ENCODE measurements at regions of chr2 and their contacts with region 1.

Region 1: DNA sequence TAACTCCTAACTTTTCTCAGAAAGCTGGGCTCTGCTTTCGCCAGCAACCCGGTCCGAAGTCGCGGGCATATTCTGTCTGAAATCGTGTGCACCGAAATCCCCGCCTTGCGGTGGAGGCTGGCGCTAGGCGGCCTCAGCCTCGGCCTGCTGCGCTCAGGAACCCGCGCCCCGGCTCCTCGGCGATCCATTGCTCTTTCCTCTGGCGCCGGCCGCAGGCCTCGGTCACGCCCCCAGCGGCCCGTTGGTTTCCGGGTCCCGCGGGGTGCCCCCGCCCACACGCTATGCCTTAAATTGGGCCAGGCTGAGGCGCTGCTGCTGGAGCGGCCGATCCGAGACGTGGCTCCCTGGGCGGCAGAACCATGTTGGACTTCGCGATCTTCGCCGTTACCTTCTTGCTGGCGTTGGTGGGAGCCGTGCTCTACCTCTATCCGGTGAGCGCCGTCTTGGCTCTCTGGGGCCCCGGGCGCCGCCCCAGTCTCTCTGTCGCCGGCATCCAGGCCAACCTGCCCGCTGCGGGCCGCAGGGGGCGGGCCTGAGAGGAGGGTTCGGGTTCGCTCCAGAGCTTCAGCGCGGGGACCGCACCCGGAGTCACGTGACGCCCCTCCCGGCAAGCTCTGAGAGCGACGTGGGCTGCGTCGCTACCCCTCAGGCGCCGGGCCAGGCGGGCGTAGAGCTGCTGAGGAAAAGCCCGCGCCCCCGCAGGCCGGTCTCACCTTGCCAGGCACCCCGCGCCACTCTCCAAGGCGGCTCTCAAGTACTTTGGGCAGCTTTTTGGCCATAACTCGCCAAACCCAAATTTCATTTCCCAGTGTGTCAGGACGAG is at the start of gene CYP20A1:
- DNase-seq: peak; percentile 95 to 99 (median 98)
- H3K4me3 ChIP-seq: peak within 1 kb of the TSS; percentile 91 to 100
- H3K4me3 Mint-ChIP-seq: peak within 1 kb of the TSS; percentile 94 to 100 (median 98)
- H3K27ac ChIP-seq: peak within 1 kb of the TSS; percentile 90
- H3K27ac Mint-ChIP-seq: peak within 1 kb of the TSS; percentile 98 to 100 (median 100)
- H3K4me1 ChIP-seq: peaks cover 19% of the 10 kb centered on the region
- H3K4me1 Mint-ChIP-seq: peaks cover 23 to 52% (median 28%) of the 10 kb centered on the region in 4 donors
- H3K27me3 ChIP-seq: no peaks in the 10 kb centered on the region
- H3K27me3 Mint-ChIP-seq: no peaks in the 10 kb centered on the region
- total RNA-seq, gene CYP20A1: 47.1 to 50.8 TPM

Region 2: DNA sequence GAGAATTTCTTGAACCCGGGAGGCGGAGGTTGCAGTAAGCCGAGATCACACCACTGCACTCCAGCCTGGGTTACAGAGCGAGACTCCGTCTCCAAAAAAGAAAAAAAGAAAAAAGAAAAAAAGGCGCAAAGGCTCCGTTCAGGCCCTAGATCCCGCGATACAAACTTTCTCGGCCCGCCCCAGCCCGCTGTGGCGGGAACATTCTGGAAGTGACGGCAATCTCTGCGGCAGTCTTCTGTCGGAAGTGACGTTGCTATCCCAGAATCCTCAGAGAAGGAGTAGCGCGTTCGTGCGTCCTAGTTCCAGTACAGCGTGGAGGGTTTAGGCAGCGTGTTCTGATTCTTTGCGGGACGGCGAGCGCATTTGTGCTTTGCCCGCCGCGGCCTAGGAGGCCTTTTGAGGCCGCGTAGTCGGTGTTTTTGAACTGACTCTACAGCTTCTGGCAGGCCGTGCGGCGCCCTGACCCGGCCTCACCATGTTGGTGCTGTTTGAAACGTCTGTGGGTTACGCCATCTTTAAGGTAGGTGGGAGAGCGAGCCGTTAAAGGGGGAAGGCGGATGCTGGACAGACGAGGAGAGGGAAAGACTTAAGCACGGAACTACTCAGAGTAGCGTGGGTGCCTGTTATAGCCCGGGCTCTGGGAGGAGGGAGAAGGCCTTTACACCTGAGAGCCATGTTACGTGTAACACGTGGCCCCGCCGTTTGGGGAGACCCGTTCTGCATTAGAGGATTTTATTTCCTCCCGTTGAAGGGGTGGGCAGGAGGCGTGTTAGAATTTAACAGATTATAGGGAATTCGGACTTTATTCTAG is 973.2 kb before region 1 on chr2 and contains the start of gene NOP58:
- CTCF ChIA-PET with region 1: no interaction called
- POLR2A ChIA-PET with region 1: no interaction called
- intact Hi-C with region 1: loop called (anchors 5 kb)
- DNase-seq: peak; percentile 91 to 96 (median 94)
- H3K4me3 ChIP-seq: peak within 1 kb of the TSS; percentile 92 to 97
- H3K4me3 Mint-ChIP-seq: peak within 1 kb of the TSS in 6 of 8 donors; percentile 55 to 79 (median 67)
- H3K27ac ChIP-seq: peak within 1 kb of the TSS; percentile 99
- H3K27ac Mint-ChIP-seq: peak within 1 kb of the TSS in 5 of 7 donors; percentile 48 to 91 (median 72)
- H3K4me1 ChIP-seq: peaks cover 39% of the 10 kb centered on the region
- H3K4me1 Mint-ChIP-seq: peaks cover 9 to 35% (median 16%) of the 10 kb centered on the region in 4 donors
- H3K27me3 ChIP-seq: no peaks in the 10 kb centered on the region
- H3K27me3 Mint-ChIP-seq: no peaks in the 10 kb centered on the region
- total RNA-seq, gene NOP58: 114 to 123 TPM

Region 3: GRCh38 chr2:202588647-202589581 is 650.0 kb before region 1 on chr2:
- CTCF ChIA-PET with region 1: no interaction called
- POLR2A ChIA-PET with region 1: no interaction called
- intact Hi-C with region 1: loop called (anchors 5 kb)
- DNase-seq: peak; percentile 71 to 77 (median 72)
- H3K4me3 ChIP-seq: no peak overlapping the region
- H3K4me3 Mint-ChIP-seq: peak overlapping the region in 2 of 8 donors; percentile 43 to 50
- H3K27ac ChIP-seq: no peak overlapping the region
- H3K27ac Mint-ChIP-seq: peak overlapping the region in 1 of 7 donors; percentile 4
- H3K4me1 ChIP-seq: peaks cover 5% of the 10 kb centered on the region
- H3K4me1 Mint-ChIP-seq: peaks cover 4 to 8% (median 7%) of the 10 kb centered on the region in 4 donors
- H3K27me3 ChIP-seq: no peaks in the 10 kb centered on the region
- H3K27me3 Mint-ChIP-seq: peaks cover 0 to 2% of the 10 kb centered on the region in 2 donors

Region 4: GRCh38 chr2:202671317-202672035 is 567.4 kb before region 1 on chr2:
- CTCF ChIA-PET with region 1: no interaction called
- POLR2A ChIA-PET with region 1: no interaction called
- intact Hi-C with region 1: no loop called
- DNase-seq: no peak
- H3K4me3 ChIP-seq: no peak overlapping the region
- H3K4me3 Mint-ChIP-seq: no peak overlapping the region
- H3K27ac ChIP-seq: no peak overlapping the region
- H3K27ac Mint-ChIP-seq: peak overlapping the region in 1 of 7 donors; percentile 14
- H3K4me1 ChIP-seq: peaks cover 40% of the 10 kb centered on the region
- H3K4me1 Mint-ChIP-seq: peaks cover 35 to 64% (median 46%) of the 10 kb centered on the region in 4 donors
- H3K27me3 ChIP-seq: no peaks in the 10 kb centered on the region
- H3K27me3 Mint-ChIP-seq: no peaks in the 10 kb centered on the region

Region 5: DNA sequence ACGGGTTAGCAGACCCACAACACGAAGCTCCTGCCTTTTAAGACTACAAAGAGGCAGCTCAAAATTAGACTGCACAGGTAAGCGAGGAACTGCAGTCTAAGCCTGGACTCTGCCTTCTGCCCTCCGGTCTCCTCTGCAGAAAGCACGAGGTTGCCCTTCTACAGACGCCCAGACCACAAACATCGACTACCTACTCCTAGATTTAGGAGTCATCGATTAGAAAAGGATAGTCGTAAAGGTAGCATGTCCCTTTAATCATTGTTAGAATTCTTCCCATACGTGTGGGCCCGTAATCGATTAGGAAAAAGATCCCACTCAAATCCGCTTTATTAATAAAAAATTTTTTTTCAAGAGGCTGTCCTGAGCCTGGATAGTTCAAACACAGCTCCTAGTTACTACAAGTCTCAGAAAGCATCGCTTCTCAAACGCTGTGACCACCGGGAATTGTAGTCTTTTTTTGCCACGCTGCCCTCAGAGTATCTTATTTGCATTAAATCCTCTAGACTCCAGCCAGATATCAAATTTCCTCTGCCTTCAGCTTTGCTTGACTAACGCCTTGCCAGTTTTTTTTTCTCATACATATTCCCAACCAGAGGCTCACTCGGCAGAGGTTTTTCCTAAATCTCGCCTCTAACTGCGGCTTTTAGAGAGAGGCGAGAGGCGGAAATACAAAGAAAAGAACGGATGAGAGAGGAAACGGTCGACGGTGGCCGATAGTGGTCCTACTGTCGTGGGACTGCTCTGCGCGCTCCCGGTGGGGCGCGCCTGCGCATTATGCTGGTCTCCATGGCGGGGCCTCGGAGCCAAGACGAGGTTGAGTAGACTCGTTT is 327.2 kb before region 1 on chr2 and contains the starts of genes CARF and WDR12:
- CTCF ChIA-PET with region 1: interaction called, 7 read pairs
- POLR2A ChIA-PET with region 1: interaction called, 28 read pairs
- intact Hi-C with region 1: loop called (anchors 1 kb)
- DNase-seq: peak; percentile 92
- H3K4me3 ChIP-seq: peak within 1 kb of the TSS; percentile 94 to 96
- H3K4me3 Mint-ChIP-seq: peak within 1 kb of the TSS; percentile 92 to 99 (median 98)
- H3K27ac ChIP-seq: peak within 1 kb of the TSS; percentile 74
- H3K27ac Mint-ChIP-seq: peak within 1 kb of the TSS; percentile 93 to 99 (median 98)
- H3K4me1 ChIP-seq: peaks cover 15% of the 10 kb centered on the region
- H3K4me1 Mint-ChIP-seq: peaks cover 16 to 48% (median 32%) of the 10 kb centered on the region in 4 donors
- H3K27me3 ChIP-seq: no peaks in the 10 kb centered on the region
- H3K27me3 Mint-ChIP-seq: no peaks in the 10 kb centered on the region
- total RNA-seq, gene CARF: 24.4 to 27.6 TPM
- total RNA-seq, gene WDR12: 21.3 to 25.0 TPM

Region 6: DNA sequence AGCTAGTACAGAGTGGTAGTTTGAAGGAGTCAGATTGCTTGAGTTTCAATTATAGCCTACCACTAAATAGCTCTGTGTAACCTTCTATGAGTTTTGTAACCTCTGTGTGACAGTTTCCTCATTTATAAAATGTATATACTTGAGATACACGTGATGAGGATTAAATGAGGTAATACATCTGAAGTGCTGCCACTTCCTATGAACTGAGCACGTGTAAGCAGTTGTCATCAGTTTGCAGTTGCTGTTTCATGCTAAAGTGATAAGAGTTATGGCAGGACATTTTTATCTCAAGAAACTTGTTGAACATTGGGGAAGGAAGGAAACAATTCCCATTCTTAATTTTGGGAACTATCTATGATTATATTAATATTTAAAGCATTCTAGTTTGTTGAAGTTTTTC is 288.3 kb before region 1 on chr2:
- CTCF ChIA-PET with region 1: no interaction called
- POLR2A ChIA-PET with region 1: no interaction called
- intact Hi-C with region 1: no loop called
- DNase-seq: no peak
- H3K4me3 ChIP-seq: no peak overlapping the region
- H3K4me3 Mint-ChIP-seq: no peak overlapping the region
- H3K27ac ChIP-seq: no peak overlapping the region
- H3K27ac Mint-ChIP-seq: no peak overlapping the region
- H3K4me1 ChIP-seq: no peaks in the 10 kb centered on the region
- H3K4me1 Mint-ChIP-seq: peaks cover 0 to 2% (median 0%) of the 10 kb centered on the region in 4 donors
- H3K27me3 ChIP-seq: no peaks in the 10 kb centered on the region
- H3K27me3 Mint-ChIP-seq: no peaks in the 10 kb centered on the region

Region 7: DNA sequence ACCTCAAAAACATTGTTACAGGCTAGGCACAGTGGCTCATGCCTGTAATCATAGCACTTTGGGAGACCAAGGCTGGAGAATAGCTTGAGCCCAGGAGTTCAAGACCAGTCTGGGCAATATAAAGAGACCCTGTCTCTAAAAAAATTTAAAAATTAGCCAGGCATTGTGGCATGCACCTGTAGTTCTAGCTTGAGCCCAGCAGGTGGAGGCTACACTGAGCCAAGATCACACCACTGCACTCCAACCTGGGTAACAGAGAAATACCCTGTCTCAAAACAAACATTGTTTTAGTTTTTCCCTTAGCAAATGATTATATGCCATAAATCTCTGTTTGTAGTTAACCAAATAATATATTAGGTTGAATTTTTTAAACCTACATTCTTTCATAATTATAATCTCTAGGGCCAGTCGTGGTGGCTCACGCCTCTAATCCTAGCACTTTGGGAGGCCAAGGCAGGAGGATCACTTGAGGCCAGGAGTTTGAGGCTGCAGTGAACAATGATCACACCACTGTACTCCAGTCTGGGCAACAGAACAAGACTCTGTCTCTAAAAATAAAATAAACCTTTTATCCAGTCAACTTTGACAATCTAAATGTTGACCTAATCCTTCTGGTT is 13.4 kb before region 1 on chr2:
- CTCF ChIA-PET with region 1: interaction called, 24 read pairs
- POLR2A ChIA-PET with region 1: interaction called, 4 read pairs
- intact Hi-C with region 1: loop called (anchors 1 kb)
- DNase-seq: peak in 4 of 5 donors; percentile 20 to 37 (median 28)
- H3K4me3 ChIP-seq: no peak overlapping the region
- H3K4me3 Mint-ChIP-seq: no peak overlapping the region
- H3K27ac ChIP-seq: no peak overlapping the region
- H3K27ac Mint-ChIP-seq: no peak overlapping the region
- H3K4me1 ChIP-seq: no peaks in the 10 kb centered on the region
- H3K4me1 Mint-ChIP-seq: no peaks in the 10 kb centered on the region
- H3K27me3 ChIP-seq: no peaks in the 10 kb centered on the region
- H3K27me3 Mint-ChIP-seq: no peaks in the 10 kb centered on the region

Region 8: GRCh38 chr2:203280428-203281064 is 41.6 kb after region 1 on chr2:
- CTCF ChIA-PET with region 1: no interaction called
- POLR2A ChIA-PET with region 1: no interaction called
- intact Hi-C with region 1: no loop called
- DNase-seq: no peak
- H3K4me3 ChIP-seq: no peak overlapping the region
- H3K4me3 Mint-ChIP-seq: no peak overlapping the region
- H3K27ac ChIP-seq: no peak overlapping the region
- H3K27ac Mint-ChIP-seq: no peak overlapping the region
- H3K4me1 ChIP-seq: no peaks in the 10 kb centered on the region
- H3K4me1 Mint-ChIP-seq: peaks cover 0 to 4% (median 1%) of the 10 kb centered on the region in 4 donors
- H3K27me3 ChIP-seq: no peaks in the 10 kb centered on the region
- H3K27me3 Mint-ChIP-seq: no peaks in the 10 kb centered on the region

Region 9: DNA sequence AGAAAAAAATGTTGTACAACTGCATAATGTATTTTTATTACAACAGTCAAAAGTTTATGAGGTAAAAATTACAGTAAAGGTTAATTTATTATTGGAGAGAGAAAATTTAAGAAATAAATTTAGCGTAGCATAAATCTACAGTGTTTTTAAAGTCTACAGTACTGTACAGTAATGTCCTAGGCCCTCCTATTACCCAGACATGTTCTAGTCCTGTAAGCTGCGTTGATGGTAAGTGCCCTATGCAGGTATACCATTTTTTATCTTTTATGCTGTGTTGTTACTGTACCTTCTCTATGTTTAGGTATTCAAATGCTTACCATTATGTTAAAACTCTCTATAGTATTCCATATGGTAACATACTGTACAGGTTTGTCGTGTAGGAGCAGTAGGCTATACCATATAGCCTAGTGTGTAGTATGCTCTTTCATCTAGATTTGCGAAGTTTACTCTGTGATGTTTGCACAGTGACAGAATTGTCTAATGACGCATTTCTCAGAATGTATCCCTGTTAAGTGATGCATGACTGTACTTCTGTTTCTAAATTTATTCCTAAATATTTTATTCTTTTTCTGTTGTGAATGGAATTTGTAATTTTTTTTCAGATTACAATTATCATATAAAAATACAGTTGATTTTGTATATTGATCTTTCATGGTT is 113.8 kb after region 1 on chr2:
- CTCF ChIA-PET with region 1: no interaction called
- POLR2A ChIA-PET with region 1: no interaction called
- intact Hi-C with region 1: no loop called
- DNase-seq: no peak
- H3K4me3 ChIP-seq: no peak overlapping the region
- H3K4me3 Mint-ChIP-seq: no peak overlapping the region
- H3K27ac ChIP-seq: no peak overlapping the region
- H3K27ac Mint-ChIP-seq: no peak overlapping the region
- H3K4me1 ChIP-seq: no peaks in the 10 kb centered on the region
- H3K4me1 Mint-ChIP-seq: peaks cover 0 to 3% (median 2%) of the 10 kb centered on the region in 4 donors
- H3K27me3 ChIP-seq: no peaks in the 10 kb centered on the region
- H3K27me3 Mint-ChIP-seq: no peaks in the 10 kb centered on the region

Region 10: GRCh38 chr2:203706403-203706802 is 467.5 kb after region 1 on chr2 and contains the start of gene CD28:
- CTCF ChIA-PET with region 1: no interaction called
- POLR2A ChIA-PET with region 1: interaction called, 4 read pairs
- intact Hi-C with region 1: loop called (anchors 5 kb)
- DNase-seq: peak; percentile 94 to 96 (median 94)
- H3K4me3 ChIP-seq: peak within 1 kb of the TSS; percentile 78 to 90
- H3K4me3 Mint-ChIP-seq: peak within 1 kb of the TSS; percentile 86 to 99 (median 92)
- H3K27ac ChIP-seq: peak within 1 kb of the TSS; percentile 94
- H3K27ac Mint-ChIP-seq: peak within 1 kb of the TSS; percentile 93 to 100 (median 99)
- H3K4me1 ChIP-seq: peaks cover 44% of the 10 kb centered on the region
- H3K4me1 Mint-ChIP-seq: peaks cover 42 to 75% (median 55%) of the 10 kb centered on the region in 4 donors
- H3K27me3 ChIP-seq: no peaks in the 10 kb centered on the region
- H3K27me3 Mint-ChIP-seq: no peaks in the 10 kb centered on the region
- total RNA-seq, gene CD28: 203 to 222 TPM